Activated CD4-positive, alpha-beta T cell treated with anti-CD3 and anti-CD28 coated beads for 36 hours (primary cell): ENCODE measurements at regions of chr12 and their contacts with region 1.

Region 1: GRCh38 chr12:712172-712863 is 40.1 kb upstream of the WNK1 start:
- DNase-seq: no peak
- ATAC-seq: no peak
- H3K4me3 Mint-ChIP-seq: no peak overlapping the region
- H3K27ac Mint-ChIP-seq: peak overlapping the region; percentile 49
- H3K4me1 Mint-ChIP-seq: peaks cover 40% of the 10 kb centered on the region
- H3K27me3 Mint-ChIP-seq: no peaks in the 10 kb centered on the region

Region 2: GRCh38 chr12:685388-685787 is 26.9 kb before region 1 on chr12:
- CTCF ChIA-PET with region 1: interaction called, 3 read pairs
- POLR2A ChIA-PET with region 1: interaction called, 5 read pairs
- intact Hi-C with region 1: loop called in 1 of 2 experiments (anchors 1 kb)
- DNase-seq: peak; percentile 89
- ATAC-seq: peak; percentile 96
- H3K4me3 Mint-ChIP-seq: no peak overlapping the region
- H3K27ac Mint-ChIP-seq: peak overlapping the region; percentile 75
- H3K4me1 Mint-ChIP-seq: peaks cover 44% of the 10 kb centered on the region
- H3K27me3 Mint-ChIP-seq: no peaks in the 10 kb centered on the region

Region 3: GRCh38 chr12:1054117-1054870 is 342.0 kb after region 1 on chr12:
- CTCF ChIA-PET with region 1: no interaction called
- POLR2A ChIA-PET with region 1: no interaction called
- intact Hi-C with region 1: no loop called
- DNase-seq: no peak
- ATAC-seq: no peak
- H3K4me3 Mint-ChIP-seq: no peak overlapping the region
- H3K27ac Mint-ChIP-seq: no peak overlapping the region
- H3K4me1 Mint-ChIP-seq: no peaks in the 10 kb centered on the region
- H3K27me3 Mint-ChIP-seq: no peaks in the 10 kb centered on the region